Heart left ventricle (tissue), 16 donors: ENCODE measurements at regions of chr5 and their contacts with region 1.

Region 1: DNA sequence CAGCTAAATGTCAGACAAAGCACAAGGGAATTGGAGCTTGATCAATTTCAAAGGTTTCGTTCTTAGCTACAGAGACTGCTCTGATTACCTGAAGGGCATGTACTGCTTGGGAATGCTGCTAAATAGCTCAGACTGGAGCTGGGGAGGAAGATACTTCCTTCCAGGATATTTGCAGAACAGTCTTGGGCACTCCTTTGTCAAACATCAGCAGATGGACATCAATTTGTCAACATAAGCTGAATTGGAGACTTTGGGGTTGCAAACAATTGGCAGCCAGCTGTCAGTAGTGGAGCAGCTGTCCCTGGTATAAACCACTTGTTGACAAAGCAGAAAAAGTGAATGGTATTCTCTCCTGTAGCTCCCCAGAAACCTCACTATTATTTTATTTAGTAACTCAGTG is 182.0 kb downstream of the CCDC192 start:
- DNase-seq: no peak
- ATAC-seq: peak in 1 of 4 donors; percentile 9
- H3K4me3 ChIP-seq: no peak overlapping the region
- H3K27ac ChIP-seq: peak overlapping the region in 5 of 12 donors; percentile 19 to 58 (median 42)
- H3K4me1 ChIP-seq: peaks cover 0 to 13% (median 7%) of the 10 kb centered on the region in 12 donors
- H3K27me3 ChIP-seq: no peaks in the 10 kb centered on the region
- CTCF ChIP-seq: no peak
- POLR2A ChIP-seq: no peak

Region 2: DNA sequence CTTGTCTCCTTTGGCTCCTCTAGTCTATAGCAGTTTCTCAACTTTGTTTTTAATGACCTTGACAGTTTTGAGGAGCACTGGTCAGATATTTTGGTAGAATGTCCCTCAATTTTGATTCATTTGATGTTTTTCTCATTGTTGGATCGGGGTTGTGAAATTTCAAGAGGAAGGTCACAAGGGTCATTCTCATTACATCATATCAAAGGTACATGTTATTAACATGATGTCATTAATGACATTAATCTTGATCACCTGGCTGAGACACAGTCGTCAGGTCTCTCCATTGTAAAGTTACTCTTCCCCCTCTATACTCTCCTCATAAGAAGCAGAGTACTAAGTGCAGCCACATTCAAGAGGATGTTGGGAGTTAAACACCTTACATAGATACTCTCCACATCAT is 1216.6 kb after region 1 on chr5:
- intact Hi-C with region 1: loop called in 1 of 10 experiments (anchors 10 kb)
- DNase-seq: no peak
- ATAC-seq: no peak
- H3K4me3 ChIP-seq: no peak overlapping the region
- H3K27ac ChIP-seq: no peak overlapping the region
- H3K4me1 ChIP-seq: peaks cover 4 to 79% (median 32%) of the 10 kb centered on the region in 12 donors
- H3K27me3 ChIP-seq: no peaks in the 10 kb centered on the region
- CTCF ChIP-seq: no peak
- POLR2A ChIP-seq: no peak